ENCODE measurements at regions of chr11 and their contacts with region 1.

Region 1: GRCh38 chr11:94623120-94623735 is 56.1 kb downstream of the PIWIL4 start:
- DNase-seq: peak; percentile 76

Region 2: GRCh38 chr11:94613120-94613519 is 10.1 kb before region 1 on chr11:
- CTCF ChIA-PET with region 1: interaction called, 10 read pairs
- POLR2A ChIA-PET with region 1: no interaction called
- DNase-seq: no peak

Region 3: GRCh38 chr11:94897330-94897768 is 274.1 kb after region 1 on chr11:
- CTCF ChIA-PET with region 1: interaction called, 16 read pairs
- POLR2A ChIA-PET with region 1: no interaction called
- DNase-seq: peak; percentile 53